Pancreas (tissue), 10 donors: ENCODE measurements at regions of chr17 and their contacts with region 1.

Region 1: DNA sequence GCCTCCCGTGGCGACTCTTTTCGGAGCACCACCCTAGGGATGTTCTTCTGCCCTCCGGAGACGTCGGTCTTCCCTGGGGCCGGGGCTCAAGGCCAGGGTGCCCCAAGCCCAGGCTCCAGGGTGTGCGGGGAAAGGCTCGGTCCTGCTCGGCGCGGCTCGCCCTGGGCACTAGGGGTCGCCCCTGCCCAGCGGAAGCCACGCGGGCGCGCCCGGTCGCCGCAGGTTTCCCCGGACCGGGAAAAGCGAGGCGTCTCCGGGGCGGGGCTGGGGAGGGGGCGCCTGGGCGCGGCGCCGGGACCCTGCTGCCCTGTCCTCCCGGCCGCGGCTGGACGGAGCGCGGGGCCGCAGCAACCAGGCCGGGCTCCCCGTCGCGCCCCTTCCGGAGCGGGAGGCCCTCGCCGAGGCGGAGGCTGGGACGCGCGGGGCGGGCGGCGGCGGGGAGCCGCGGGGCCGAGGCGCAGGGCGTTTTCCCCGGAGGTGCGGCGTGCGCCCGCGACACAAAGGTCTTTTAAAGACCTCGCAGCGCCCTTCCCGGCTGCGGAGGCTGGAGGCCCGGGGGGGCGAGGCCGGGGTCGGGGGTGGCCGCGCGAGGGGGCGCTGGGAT is 76.4 kb downstream of the MRC2 start:
- DNase-seq: peak; percentile 50 to 94 (median 77)
- ATAC-seq: peak; percentile 92 to 97 (median 96)
- H3K4me3 ChIP-seq: peak overlapping the region; percentile 51 to 79 (median 60)
- H3K27ac ChIP-seq: peak overlapping the region in 3 of 4 donors; percentile 24 to 84 (median 39)
- H3K4me1 ChIP-seq: peaks cover 0 to 14% (median 0%) of the 10 kb centered on the region in 3 donors
- H3K27me3 ChIP-seq: no peaks in the 10 kb centered on the region
- CTCF ChIP-seq: peak; percentile 60 to 82 (median 68)

Region 2: DNA sequence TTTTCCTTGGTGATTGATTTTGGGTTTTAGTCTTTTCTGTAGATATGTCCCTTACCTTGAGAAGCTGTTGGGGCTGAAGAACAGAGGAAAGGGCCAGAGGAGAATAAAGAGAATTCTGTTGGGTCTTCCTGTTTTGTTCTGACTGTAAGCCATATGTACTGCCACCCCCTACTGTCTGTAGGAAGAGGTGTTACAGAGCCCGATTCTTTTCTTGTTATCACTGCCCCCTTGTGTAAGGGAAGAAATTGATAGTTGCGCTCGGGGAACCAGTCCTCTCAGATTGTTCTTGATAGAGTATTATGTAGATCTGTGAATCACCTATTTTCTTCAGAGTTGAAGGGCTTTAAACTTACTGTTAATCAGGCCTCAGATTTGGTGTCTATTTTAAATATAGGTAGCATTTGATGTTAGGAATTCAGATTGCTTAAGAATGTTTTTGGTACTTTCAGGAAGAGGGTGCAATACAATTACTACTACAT is 264.6 kb after region 1 on chr17:
- intact Hi-C with region 1: loop called in 2 of 3 experiments (anchors 5 to 10 kb)
- DNase-seq: peak in 3 of 6 donors; percentile 40 to 51 (median 42)
- ATAC-seq: peak; percentile 33 to 84 (median 70)
- H3K4me3 ChIP-seq: peak overlapping the region in 1 of 4 donors; percentile 88
- H3K27ac ChIP-seq: no peak overlapping the region
- H3K4me1 ChIP-seq: peaks cover 6 to 18% (median 16%) of the 10 kb centered on the region in 3 donors
- H3K27me3 ChIP-seq: no peaks in the 10 kb centered on the region
- CTCF ChIP-seq: peak in 3 of 4 donors; percentile 50 to 62 (median 53)